ENCODE measurements at regions of chr5 and their contacts with region 1.

Region 1: DNA sequence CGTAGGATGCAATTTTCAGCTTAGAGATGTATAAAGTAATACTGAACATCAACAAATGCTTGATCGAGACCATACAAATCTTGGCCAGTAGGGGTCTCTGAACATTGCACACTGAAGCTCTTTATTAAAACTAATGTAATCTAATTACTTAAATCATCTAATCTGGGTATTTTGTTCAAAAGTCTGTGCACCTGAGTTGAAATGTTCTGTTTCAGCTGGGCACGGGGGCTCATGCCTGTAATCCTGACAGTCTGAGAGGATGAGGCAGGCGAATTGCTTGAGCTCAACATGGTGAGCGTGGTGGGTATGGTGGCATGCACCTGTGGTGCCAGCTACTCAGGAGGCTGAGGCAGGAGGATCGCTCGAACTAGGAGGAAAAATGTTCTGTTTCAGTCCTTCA is 41.0 kb downstream of the ESM1 start:
- DNase-seq: peak; percentile 7 to 56 (median 45)
- H3K4me3 ChIP-seq: no peak overlapping the region
- H3K4me3 Mint-ChIP-seq: no peak overlapping the region
- H3K27ac ChIP-seq: no peak overlapping the region
- H3K27ac Mint-ChIP-seq: no peak overlapping the region
- H3K4me1 ChIP-seq: no peaks in the 10 kb centered on the region
- H3K4me1 Mint-ChIP-seq: peaks cover 0 to 5% (median 4%) of the 10 kb centered on the region in 3 donors
- H3K27me3 ChIP-seq: no peaks in the 10 kb centered on the region
- H3K27me3 Mint-ChIP-seq: no peaks in the 10 kb centered on the region

Region 2: GRCh38 chr5:54832858-54833257 is 111.5 kb before region 1 on chr5:
- CTCF ChIA-PET with region 1: no interaction called
- POLR2A ChIA-PET with region 1: no interaction called
- DNase-seq: no peak
- H3K4me3 ChIP-seq: no peak overlapping the region
- H3K4me3 Mint-ChIP-seq: no peak overlapping the region
- H3K27ac ChIP-seq: no peak overlapping the region
- H3K27ac Mint-ChIP-seq: peak overlapping the region in 4 of 8 donors; percentile 30 to 63 (median 48)
- H3K4me1 ChIP-seq: no peaks in the 10 kb centered on the region
- H3K4me1 Mint-ChIP-seq: peaks cover 16 to 33% (median 18%) of the 10 kb centered on the region in 3 donors
- H3K27me3 ChIP-seq: no peaks in the 10 kb centered on the region
- H3K27me3 Mint-ChIP-seq: peaks cover 0 to 1% of the 10 kb centered on the region in 2 donors

Region 3: DNA sequence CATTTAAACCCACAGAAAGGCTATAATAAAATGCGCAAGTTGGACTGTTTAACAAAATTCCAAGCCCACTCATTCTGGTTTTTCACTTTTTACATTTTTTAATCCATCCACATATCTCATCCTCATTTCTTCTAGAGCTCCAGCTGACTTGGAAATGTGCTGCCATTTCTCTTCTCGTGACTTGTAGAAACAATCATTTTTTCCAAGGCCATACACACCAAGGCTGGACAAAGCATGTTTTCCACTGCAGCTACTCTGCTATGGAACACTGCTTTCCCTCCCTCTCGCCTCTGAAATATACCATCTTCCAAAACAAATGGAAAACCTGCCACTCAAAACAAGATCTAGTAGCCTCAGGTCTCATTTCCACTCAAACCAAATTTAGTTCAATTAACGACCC is 100.1 kb before region 1 on chr5:
- CTCF ChIA-PET with region 1: no interaction called
- POLR2A ChIA-PET with region 1: no interaction called
- DNase-seq: no peak
- H3K4me3 ChIP-seq: no peak overlapping the region
- H3K4me3 Mint-ChIP-seq: no peak overlapping the region
- H3K27ac ChIP-seq: no peak overlapping the region
- H3K27ac Mint-ChIP-seq: no peak overlapping the region
- H3K4me1 ChIP-seq: peaks cover 4% of the 10 kb centered on the region
- H3K4me1 Mint-ChIP-seq: peaks cover 2 to 9% (median 4%) of the 10 kb centered on the region in 3 donors
- H3K27me3 ChIP-seq: no peaks in the 10 kb centered on the region
- H3K27me3 Mint-ChIP-seq: peaks cover 10 to 13% of the 10 kb centered on the region in 2 donors

Region 4: DNA sequence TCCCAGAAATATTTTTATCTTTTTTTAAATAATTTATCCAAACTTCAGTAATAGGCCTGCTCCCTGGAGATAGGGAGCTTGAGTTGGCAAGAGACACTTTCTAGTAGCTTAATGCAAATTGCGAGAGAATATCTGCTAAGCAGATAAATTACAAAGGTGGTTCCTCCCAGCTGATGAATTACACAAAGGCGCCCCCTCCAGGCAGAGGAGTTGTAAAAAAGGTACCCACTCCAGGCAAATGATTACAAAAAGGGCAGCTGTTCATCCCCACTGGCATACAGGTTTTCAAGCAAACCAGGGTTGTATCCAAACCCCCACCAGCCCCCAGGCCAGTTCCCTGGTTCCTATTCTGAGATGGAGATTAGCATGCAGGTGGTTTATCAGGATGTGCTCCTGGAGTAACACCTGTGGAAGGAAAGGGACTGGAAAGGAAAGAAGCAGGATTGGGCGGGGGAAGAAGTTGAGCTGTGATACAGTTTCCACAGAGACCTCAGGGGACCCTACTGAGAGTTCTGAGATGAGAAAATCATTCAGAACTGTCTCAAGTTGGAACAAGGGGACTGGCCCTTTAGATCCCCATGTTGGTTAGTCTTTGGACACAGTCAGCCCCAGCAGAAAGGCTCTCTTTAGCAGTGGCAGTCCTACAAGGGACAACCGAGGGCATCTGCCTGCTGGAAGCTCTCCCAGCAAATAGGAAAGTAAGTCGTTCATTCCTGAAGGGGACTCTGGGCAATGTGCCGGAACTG is 15.5 kb after region 1 on chr5:
- CTCF ChIA-PET with region 1: interaction called, 34 read pairs
- POLR2A ChIA-PET with region 1: no interaction called
- DNase-seq: no peak
- H3K4me3 ChIP-seq: no peak overlapping the region
- H3K4me3 Mint-ChIP-seq: no peak overlapping the region
- H3K27ac ChIP-seq: no peak overlapping the region
- H3K27ac Mint-ChIP-seq: no peak overlapping the region
- H3K4me1 ChIP-seq: no peaks in the 10 kb centered on the region
- H3K4me1 Mint-ChIP-seq: peaks cover 7 to 13% (median 10%) of the 10 kb centered on the region in 3 donors
- H3K27me3 ChIP-seq: no peaks in the 10 kb centered on the region
- H3K27me3 Mint-ChIP-seq: no peaks in the 10 kb centered on the region

Region 5: GRCh38 chr5:55037046-55037771 is 92.8 kb after region 1 on chr5:
- CTCF ChIA-PET with region 1: interaction called, 18 read pairs
- POLR2A ChIA-PET with region 1: interaction called, 5 read pairs
- DNase-seq: peak; percentile 34 to 76 (median 44)
- H3K4me3 ChIP-seq: peak overlapping the region; percentile 30
- H3K4me3 Mint-ChIP-seq: peak overlapping the region; percentile 3 to 73 (median 63)
- H3K27ac ChIP-seq: peak overlapping the region; percentile 20
- H3K27ac Mint-ChIP-seq: peak overlapping the region; percentile 88 to 95 (median 92)
- H3K4me1 ChIP-seq: peaks cover 31% of the 10 kb centered on the region
- H3K4me1 Mint-ChIP-seq: peaks cover 55 to 68% (median 62%) of the 10 kb centered on the region in 3 donors
- H3K27me3 ChIP-seq: no peaks in the 10 kb centered on the region
- H3K27me3 Mint-ChIP-seq: no peaks in the 10 kb centered on the region

Region 6: DNA sequence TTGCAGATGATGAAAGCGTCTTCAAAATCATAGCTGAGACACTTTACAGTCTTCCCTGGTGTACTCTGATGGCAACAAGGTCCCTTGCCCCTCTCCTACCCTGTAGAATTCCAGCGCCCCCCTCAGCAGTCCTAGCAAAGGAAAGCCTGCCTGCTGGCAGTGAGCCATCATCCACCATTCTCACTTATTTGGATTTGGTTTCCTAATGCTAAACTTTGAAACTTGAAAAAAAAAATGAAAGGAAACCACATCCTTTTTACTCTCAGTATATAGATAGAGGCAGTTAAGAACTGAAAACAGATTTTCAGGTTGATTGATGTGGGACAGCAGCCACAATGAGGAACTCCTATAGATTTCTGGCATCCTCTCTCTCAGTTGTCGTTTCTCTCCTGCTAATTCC is 158.0 kb after region 1 on chr5 and contains the start of gene GZMA:
- CTCF ChIA-PET with region 1: interaction called, 31 read pairs
- POLR2A ChIA-PET with region 1: interaction called, 7 read pairs
- DNase-seq: peak; percentile 13 to 78 (median 68)
- H3K4me3 ChIP-seq: peak within 1 kb of the TSS; percentile 54
- H3K4me3 Mint-ChIP-seq: peak within 1 kb of the TSS; percentile 89 to 98 (median 93)
- H3K27ac ChIP-seq: peak within 1 kb of the TSS; percentile 41
- H3K27ac Mint-ChIP-seq: peak within 1 kb of the TSS; percentile 72 to 99 (median 89)
- H3K4me1 ChIP-seq: peaks cover 58% of the 10 kb centered on the region
- H3K4me1 Mint-ChIP-seq: peaks cover 71 to 86% (median 86%) of the 10 kb centered on the region in 3 donors
- H3K27me3 ChIP-seq: no peaks in the 10 kb centered on the region
- H3K27me3 Mint-ChIP-seq: no peaks in the 10 kb centered on the region
- total RNA-seq, gene GZMA: 13.3 to 15.1 TPM

Region 7: DNA sequence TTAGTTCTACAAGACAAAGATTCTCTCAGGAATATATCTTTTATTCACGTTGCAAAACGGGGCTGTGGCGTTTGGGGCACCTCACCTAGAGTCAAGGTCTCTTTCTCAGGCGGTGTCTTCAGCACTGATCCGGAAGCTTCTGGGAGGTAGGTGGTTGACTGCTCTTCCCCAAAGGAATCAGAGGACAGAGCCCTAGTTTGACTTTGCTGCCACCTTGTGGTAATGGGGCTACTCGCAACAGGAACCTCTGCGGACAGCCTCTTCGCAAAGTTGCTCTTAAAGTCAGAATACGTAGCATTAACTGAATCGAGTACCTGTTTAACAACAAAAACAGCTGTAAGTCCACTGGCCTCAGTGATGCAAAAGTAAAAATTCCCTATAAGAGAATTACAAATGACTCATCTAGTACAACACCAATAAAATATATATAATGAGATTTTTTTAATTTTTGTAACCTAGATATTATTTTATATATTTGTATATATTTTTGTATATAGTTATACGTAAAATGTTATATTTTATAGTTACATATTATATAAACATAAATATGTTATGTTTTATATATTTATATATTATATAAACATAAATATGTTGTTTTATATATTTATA is 202.3 kb after region 1 on chr5:
- CTCF ChIA-PET with region 1: interaction called, 40 read pairs
- POLR2A ChIA-PET with region 1: no interaction called
- DNase-seq: peak; percentile 66 to 86 (median 75)
- H3K4me3 ChIP-seq: peak overlapping the region; percentile 27
- H3K4me3 Mint-ChIP-seq: peak overlapping the region in 6 of 7 donors; percentile 46 to 85 (median 66)
- H3K27ac ChIP-seq: no peak overlapping the region
- H3K27ac Mint-ChIP-seq: peak overlapping the region in 3 of 8 donors; percentile 24 to 59 (median 31)
- H3K4me1 ChIP-seq: peaks cover 14% of the 10 kb centered on the region
- H3K4me1 Mint-ChIP-seq: peaks cover 15 to 30% (median 19%) of the 10 kb centered on the region in 3 donors
- H3K27me3 ChIP-seq: no peaks in the 10 kb centered on the region
- H3K27me3 Mint-ChIP-seq: peaks cover 0 to 4% of the 10 kb centered on the region in 2 donors